ENCODE measurements at regions of chr7 and their contacts with region 1.

Region 1: GRCh38 chr7:122219253-122219865 is 75.3 kb upstream of the AASS start:
- DNase-seq: no peak
- H3K4me3 ChIP-seq: no peak overlapping the region
- CTCF ChIP-seq: no peak

Region 2: DNA sequence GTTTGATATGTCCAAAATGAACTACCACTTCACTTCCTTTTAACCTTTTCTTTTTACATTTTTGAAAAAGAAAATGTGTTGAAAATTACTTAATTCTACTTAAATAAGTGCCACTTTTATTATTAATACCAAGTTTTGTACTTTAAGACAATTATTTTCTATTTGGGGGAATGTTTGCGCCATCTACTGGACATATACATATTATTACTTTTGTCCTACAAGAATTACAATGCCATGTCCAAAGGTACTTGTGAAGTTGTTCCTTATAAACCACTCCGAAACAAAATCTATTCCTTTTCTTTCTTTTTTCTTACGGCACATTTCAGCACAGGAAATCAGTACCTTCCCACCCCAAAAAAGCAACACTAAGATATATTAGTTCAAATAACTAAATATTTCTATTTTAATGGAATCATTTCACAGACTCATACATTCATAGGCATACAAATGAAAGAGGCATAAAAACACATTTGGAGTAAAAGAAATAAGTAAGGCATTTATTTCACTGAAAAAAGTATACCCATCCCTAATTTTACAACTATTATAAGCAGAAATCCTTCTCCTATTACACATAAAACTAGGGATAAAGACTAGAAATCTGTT is 309.6 kb after region 1 on chr7:
- CTCF ChIA-PET with region 1: interaction called, 41 read pairs
- POLR2A ChIA-PET with region 1: no interaction called
- DNase-seq: no peak
- H3K4me3 ChIP-seq: no peak overlapping the region
- CTCF ChIP-seq: no peak